ENCODE measurements at regions of chr11 and their contacts with region 1.

Region 1: GRCh38 chr11:72222907-72223614 is 1.5 kb upstream of the INPPL1 start:
- DNase-seq: peak; percentile 96
- ATAC-seq: peak; percentile 80
- H3K4me3 Mint-ChIP-seq: peak overlapping the region; percentile 96
- H3K27ac Mint-ChIP-seq: peak overlapping the region; percentile 80
- H3K4me1 Mint-ChIP-seq: peaks cover 16% of the 10 kb centered on the region
- H3K27me3 Mint-ChIP-seq: peaks cover 3% of the 10 kb centered on the region

Region 2: GRCh38 chr11:71913756-71914526 is 309.1 kb before region 1 on chr11:
- CTCF ChIA-PET with region 1: no interaction called
- POLR2A ChIA-PET with region 1: no interaction called
- intact Hi-C with region 1: loop called in 1 of 2 experiments (anchors 5 kb)
- DNase-seq: no peak
- ATAC-seq: no peak
- H3K4me3 Mint-ChIP-seq: no peak overlapping the region
- H3K27ac Mint-ChIP-seq: no peak overlapping the region
- H3K4me1 Mint-ChIP-seq: peaks cover 18% of the 10 kb centered on the region
- H3K27me3 Mint-ChIP-seq: no peaks in the 10 kb centered on the region

Region 3: GRCh38 chr11:72080256-72080974 is 142.6 kb before region 1 on chr11 and contains the starts of genes LRRC51 and NUMA1:
- CTCF ChIA-PET with region 1: no interaction called
- POLR2A ChIA-PET with region 1: no interaction called
- intact Hi-C with region 1: loop called (anchors 1 kb)
- DNase-seq: peak; percentile 100
- ATAC-seq: peak; percentile 96
- H3K4me3 Mint-ChIP-seq: peak within 1 kb of the TSS; percentile 91
- H3K27ac Mint-ChIP-seq: peak within 1 kb of the TSS; percentile 94
- H3K4me1 Mint-ChIP-seq: peaks cover 37% of the 10 kb centered on the region
- H3K27me3 Mint-ChIP-seq: no peaks in the 10 kb centered on the region
- total RNA-seq, gene LRRC51: 7.7 to 11.6 TPM
- total RNA-seq, gene NUMA1: 154 to 167 TPM

Region 4: GRCh38 chr11:72141066-72141465 is 82.0 kb before region 1 on chr11:
- CTCF ChIA-PET with region 1: interaction called, 3 read pairs
- POLR2A ChIA-PET with region 1: no interaction called
- intact Hi-C with region 1: loop called in 1 of 2 experiments (anchors 5 kb)
- DNase-seq: peak; percentile 62
- ATAC-seq: peak; percentile 87
- H3K4me3 Mint-ChIP-seq: no peak overlapping the region
- H3K27ac Mint-ChIP-seq: no peak overlapping the region
- H3K4me1 Mint-ChIP-seq: peaks cover 16% of the 10 kb centered on the region
- H3K27me3 Mint-ChIP-seq: peaks cover 14% of the 10 kb centered on the region

Region 5: GRCh38 chr11:72257561-72257960 is 34.5 kb after region 1 on chr11:
- CTCF ChIA-PET with region 1: no interaction called
- POLR2A ChIA-PET with region 1: no interaction called
- intact Hi-C with region 1: no loop called
- DNase-seq: no peak
- ATAC-seq: no peak
- H3K4me3 Mint-ChIP-seq: no peak overlapping the region
- H3K27ac Mint-ChIP-seq: no peak overlapping the region
- H3K4me1 Mint-ChIP-seq: no peaks in the 10 kb centered on the region
- H3K27me3 Mint-ChIP-seq: peaks cover 10% of the 10 kb centered on the region

Region 6: DNA sequence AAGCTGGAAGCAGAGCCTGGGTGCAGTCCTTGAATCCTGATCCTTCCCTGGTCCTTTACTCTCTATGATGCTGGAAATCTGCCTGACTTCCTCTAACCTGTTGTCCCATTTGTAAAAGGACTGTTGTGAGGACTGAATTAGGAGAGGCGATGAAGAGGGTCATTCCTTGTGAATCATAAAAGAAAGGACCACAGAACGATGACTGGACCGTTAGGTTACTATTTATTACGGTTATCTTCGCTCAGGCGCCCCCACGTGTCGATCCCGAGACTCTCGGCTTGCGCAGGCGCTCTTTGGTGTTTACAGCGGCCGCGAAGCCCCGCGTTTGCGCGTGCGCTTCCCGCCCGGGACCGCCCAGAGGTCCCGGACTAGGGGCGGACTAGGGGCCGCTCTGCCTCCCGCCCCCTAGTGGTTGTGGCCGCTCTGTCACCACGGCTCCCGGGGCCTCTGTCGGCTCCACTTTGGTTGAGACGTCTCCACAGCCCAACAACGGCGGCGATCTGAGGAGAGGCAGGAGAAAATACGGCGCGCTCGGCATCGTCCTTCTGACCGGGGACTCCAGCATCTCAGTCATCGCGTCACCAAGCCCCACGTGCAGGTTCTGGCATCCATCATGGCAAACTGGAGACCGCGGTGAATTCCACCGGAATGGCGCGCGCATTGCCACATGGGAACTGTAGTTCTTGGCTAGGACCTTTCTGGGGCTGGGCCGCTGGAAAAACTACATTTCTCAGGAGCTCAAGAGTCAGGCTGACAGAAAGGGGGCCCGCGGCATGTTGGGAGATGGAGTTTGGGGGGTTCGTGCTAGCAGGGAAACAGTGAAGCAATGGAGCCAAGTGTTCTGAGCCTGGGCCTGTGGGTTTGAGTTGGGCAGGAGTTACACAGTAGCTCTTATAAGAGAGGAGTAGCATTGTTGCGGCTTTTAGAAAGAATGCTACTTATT is 570.6 kb after region 1 on chr11 and contains the start of gene STARD10:
- CTCF ChIA-PET with region 1: no interaction called
- POLR2A ChIA-PET with region 1: no interaction called
- intact Hi-C with region 1: loop called in 1 of 2 experiments (anchors 1 kb)
- DNase-seq: peak; percentile 97
- ATAC-seq: peak; percentile 93
- H3K4me3 Mint-ChIP-seq: peak within 1 kb of the TSS; percentile 84
- H3K27ac Mint-ChIP-seq: peak within 1 kb of the TSS; percentile 99
- H3K4me1 Mint-ChIP-seq: peaks cover 21% of the 10 kb centered on the region
- H3K27me3 Mint-ChIP-seq: no peaks in the 10 kb centered on the region
- total RNA-seq, gene STARD10: 8.3 to 12.9 TPM